ENCODE measurements at regions of chr2 and their contacts with region 1.

Region 1: GRCh38 chr2:121649596-121650314 is 493 bp upstream of the CLASP1 start:
- DNase-seq: peak; percentile 97
- CTCF ChIP-seq: no peak

Region 2: GRCh38 chr2:121530212-121530705 is 119.5 kb before region 1 on chr2:
- in situ Hi-C with region 1: loop called (anchors 10 kb)
- DNase-seq: peak; percentile 87
- CTCF ChIP-seq: no peak

Region 3: GRCh38 chr2:121689356-121689755 is 39.6 kb after region 1 on chr2:
- in situ Hi-C with region 1: loop called (anchors 5 kb)
- DNase-seq: no peak
- CTCF ChIP-seq: no peak

Measured in GM13976 (cell line).